Prostate gland (tissue), 2 donors: ENCODE measurements at regions of chr22 and their contacts with region 1.

Region 1: GRCh38 chr22:29394931-29395581 is 6.7 kb upstream of the AP1B1 start:
- DNase-seq: peak; percentile 83
- H3K4me3 ChIP-seq: no peak overlapping the region
- H3K27ac ChIP-seq: peak overlapping the region in 1 of 2 donors; percentile 60
- H3K4me1 ChIP-seq: peaks cover 5% of the 10 kb centered on the region
- H3K27me3 ChIP-seq: no peaks in the 10 kb centered on the region
- CTCF ChIP-seq: peak; percentile 31 to 90 (median 82)
- POLR2A ChIP-seq: no peak

Region 2: DNA sequence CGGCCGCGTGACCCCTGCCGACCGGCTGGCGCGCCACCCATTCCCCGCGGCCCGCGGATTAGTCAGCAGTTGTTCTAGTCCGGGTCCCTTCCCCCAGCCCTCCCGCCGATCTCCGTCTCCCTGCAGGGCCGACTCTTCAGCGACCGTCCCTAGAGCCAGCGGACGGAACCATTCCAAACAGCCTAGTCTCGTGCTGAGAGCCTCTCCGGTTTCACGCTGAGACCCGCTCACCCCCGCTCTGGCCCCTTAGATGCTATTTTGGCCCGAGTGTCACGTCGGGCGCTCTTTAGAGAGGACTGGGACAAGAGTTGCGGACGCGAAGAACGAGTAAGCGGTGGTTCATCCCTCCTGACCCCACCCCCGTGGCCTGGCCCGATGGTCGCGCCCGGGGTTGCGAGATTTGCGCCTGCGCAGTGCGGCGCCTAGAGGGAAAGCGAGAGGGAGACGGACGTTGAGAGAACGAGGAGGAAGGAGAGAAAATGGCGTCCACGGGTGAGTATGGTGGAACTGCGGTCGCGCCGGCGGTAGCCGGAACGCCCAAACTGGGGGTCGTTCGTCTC is 127.1 kb before region 1 on chr22 and contains the starts of genes EWSR1 and RHBDD3:
- intact Hi-C with region 1: no loop called
- DNase-seq: peak; percentile 91
- H3K4me3 ChIP-seq: peak within 1 kb of the TSS; percentile 84 to 92
- H3K27ac ChIP-seq: peak within 1 kb of the TSS; percentile 97 to 98
- H3K4me1 ChIP-seq: peaks cover 6% of the 10 kb centered on the region
- H3K27me3 ChIP-seq: no peaks in the 10 kb centered on the region
- CTCF ChIP-seq: no peak
- POLR2A ChIP-seq: peak; percentile 85
- total RNA-seq, gene EWSR1: 181 to 213 TPM
- total RNA-seq, gene RHBDD3: 66.9 to 74.6 TPM

Region 3: GRCh38 chr22:29306175-29306834 is 88.8 kb before region 1 on chr22 and contains the start of gene GAS2L1:
- intact Hi-C with region 1: no loop called
- DNase-seq: peak; percentile 83
- H3K4me3 ChIP-seq: peak within 1 kb of the TSS; percentile 59 to 97
- H3K27ac ChIP-seq: peak within 1 kb of the TSS; percentile 56 to 89
- H3K4me1 ChIP-seq: peaks cover 27% of the 10 kb centered on the region
- H3K27me3 ChIP-seq: no peaks in the 10 kb centered on the region
- CTCF ChIP-seq: peak; percentile 57 to 88 (median 81)
- POLR2A ChIP-seq: no peak
- total RNA-seq, gene GAS2L1: 85.8 to 159 TPM

Region 4: GRCh38 chr22:29456211-29456671 is 61.2 kb after region 1 on chr22:
- intact Hi-C with region 1: no loop called
- DNase-seq: no peak
- H3K4me3 ChIP-seq: no peak overlapping the region
- H3K27ac ChIP-seq: no peak overlapping the region
- H3K4me1 ChIP-seq: peaks cover 5% of the 10 kb centered on the region
- H3K27me3 ChIP-seq: no peaks in the 10 kb centered on the region
- CTCF ChIP-seq: no peak
- POLR2A ChIP-seq: no peak

Region 5: GRCh38 chr22:29524440-29525191 is 129.6 kb after region 1 on chr22:
- intact Hi-C with region 1: loop called (anchors 5 kb)
- DNase-seq: peak; percentile 57
- H3K4me3 ChIP-seq: no peak overlapping the region
- H3K27ac ChIP-seq: peak overlapping the region in 1 of 2 donors; percentile 43
- H3K4me1 ChIP-seq: peaks cover 4% of the 10 kb centered on the region
- H3K27me3 ChIP-seq: no peaks in the 10 kb centered on the region
- CTCF ChIP-seq: peak in 3 of 4 experiments; percentile 59 to 80 (median 68)
- POLR2A ChIP-seq: no peak